ENCODE measurements at regions of chr2 and their contacts with region 1.

Region 1: GRCh38 chr2:181305301-181306123 is 151.7 kb upstream of the ITGA4 start:
- DNase-seq: peak; percentile 93
- H3K4me3 ChIP-seq: peak overlapping the region; percentile 56
- H3K27ac ChIP-seq: peak overlapping the region; percentile 98
- H3K4me1 ChIP-seq: peaks cover 66% of the 10 kb centered on the region
- CTCF ChIP-seq: no peak

Region 2: DNA sequence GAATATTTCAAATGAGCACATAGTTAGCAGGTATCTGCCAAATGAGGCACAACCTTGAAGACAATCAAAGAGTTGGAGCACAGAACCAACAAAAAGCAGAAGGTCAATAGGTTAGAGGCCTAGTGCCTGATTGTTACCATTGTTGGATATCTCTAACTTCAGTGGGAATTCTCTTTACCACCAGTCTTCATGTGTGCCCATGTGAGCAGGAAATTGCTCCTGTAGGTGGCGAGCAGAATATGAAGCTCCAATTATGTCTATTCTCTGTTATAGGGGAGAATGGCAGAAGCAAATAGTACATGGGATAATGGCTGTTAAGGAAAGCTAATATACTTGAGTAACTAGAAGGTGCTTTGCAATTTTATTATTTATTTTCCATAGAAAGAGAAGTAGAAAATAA is 1429.2 kb before region 1 on chr2:
- CTCF ChIA-PET with region 1: no interaction called
- POLR2A ChIA-PET with region 1: no interaction called
- intact Hi-C with region 1: loop called (anchors 5 kb)
- DNase-seq: peak; percentile 54
- H3K4me3 ChIP-seq: peak overlapping the region; percentile 66
- H3K27ac ChIP-seq: peak overlapping the region; percentile 100
- H3K4me1 ChIP-seq: peaks cover 97% of the 10 kb centered on the region
- CTCF ChIP-seq: peak; percentile 72

Region 3: GRCh38 chr2:181104512-181105115 is 200.9 kb before region 1 on chr2:
- CTCF ChIA-PET with region 1: no interaction called
- POLR2A ChIA-PET with region 1: no interaction called
- intact Hi-C with region 1: loop called (anchors 5 kb)
- DNase-seq: peak; percentile 33
- H3K4me3 ChIP-seq: no peak overlapping the region
- H3K27ac ChIP-seq: no peak overlapping the region
- H3K4me1 ChIP-seq: no peaks in the 10 kb centered on the region
- CTCF ChIP-seq: peak; percentile 90

Region 4: DNA sequence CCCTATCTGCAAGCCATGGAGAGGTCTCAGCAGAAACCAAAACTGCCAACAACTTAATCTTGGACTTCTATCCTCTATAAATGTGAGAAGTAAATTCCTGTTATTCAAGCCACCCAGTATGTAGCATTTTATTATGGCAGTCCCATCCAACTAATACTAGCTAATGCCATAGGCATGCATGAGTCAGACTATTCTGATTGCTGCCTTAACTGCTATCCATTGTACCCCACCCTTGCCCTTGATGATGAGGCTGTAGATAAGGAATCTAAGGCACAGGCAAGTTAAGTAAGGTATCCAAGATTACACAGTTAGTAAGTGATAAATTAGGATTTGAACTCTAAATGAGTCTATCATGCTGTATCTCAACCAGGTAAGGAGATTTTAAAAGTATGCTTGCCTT is 102.1 kb before region 1 on chr2:
- CTCF ChIA-PET with region 1: no interaction called
- POLR2A ChIA-PET with region 1: no interaction called
- intact Hi-C with region 1: no loop called
- DNase-seq: no peak
- H3K4me3 ChIP-seq: no peak overlapping the region
- H3K27ac ChIP-seq: no peak overlapping the region
- H3K4me1 ChIP-seq: no peaks in the 10 kb centered on the region
- CTCF ChIP-seq: no peak

Region 5: DNA sequence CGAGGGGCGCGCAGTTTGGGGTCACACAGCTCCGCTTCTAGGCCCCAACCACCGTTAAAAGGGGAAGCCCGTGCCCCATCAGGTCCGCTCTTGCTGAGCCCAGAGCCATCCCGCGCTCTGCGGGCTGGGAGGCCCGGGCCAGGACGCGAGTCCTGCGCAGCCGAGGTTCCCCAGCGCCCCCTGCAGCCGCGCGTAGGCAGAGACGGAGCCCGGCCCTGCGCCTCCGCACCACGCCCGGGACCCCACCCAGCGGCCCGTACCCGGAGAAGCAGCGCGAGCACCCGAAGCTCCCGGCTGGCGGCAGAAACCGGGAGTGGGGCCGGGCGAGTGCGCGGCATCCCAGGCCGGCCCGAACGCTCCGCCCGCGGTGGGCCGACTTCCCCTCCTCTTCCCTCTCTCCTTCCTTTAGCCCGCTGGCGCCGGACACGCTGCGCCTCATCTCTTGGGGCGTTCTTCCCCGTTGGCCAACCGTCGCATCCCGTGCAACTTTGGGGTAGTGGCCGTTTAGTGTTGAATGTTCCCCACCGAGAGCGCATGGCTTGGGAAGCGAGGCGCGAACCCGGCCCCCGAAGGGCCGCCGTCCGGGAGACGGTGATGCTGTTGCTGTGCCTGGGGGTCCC is 151.7 kb after region 1 on chr2 and contains the start of gene ITGA4:
- CTCF ChIA-PET with region 1: interaction called, 16 read pairs
- POLR2A ChIA-PET with region 1: interaction called, 198 read pairs
- intact Hi-C with region 1: loop called (anchors 1 kb)
- DNase-seq: peak; percentile 93
- H3K4me3 ChIP-seq: peak within 1 kb of the TSS; percentile 91
- H3K27ac ChIP-seq: peak within 1 kb of the TSS; percentile 95
- H3K4me1 ChIP-seq: peaks cover 44% of the 10 kb centered on the region
- CTCF ChIP-seq: peak; percentile 85
- total RNA-seq, gene ITGA4: 55.1 and 61.8 TPM in 2 replicates

Region 6: GRCh38 chr2:181573140-181573736 is 267.7 kb after region 1 on chr2:
- CTCF ChIA-PET with region 1: no interaction called
- POLR2A ChIA-PET with region 1: no interaction called
- intact Hi-C with region 1: loop called (anchors 5 kb)
- DNase-seq: peak; percentile 11
- H3K4me3 ChIP-seq: no peak overlapping the region
- H3K27ac ChIP-seq: no peak overlapping the region
- H3K4me1 ChIP-seq: no peaks in the 10 kb centered on the region
- CTCF ChIP-seq: peak; percentile 76

Region 7: GRCh38 chr2:182715896-182716668 is 1410.6 kb after region 1 on chr2 and contains the start of gene DNAJC10:
- CTCF ChIA-PET with region 1: no interaction called
- POLR2A ChIA-PET with region 1: interaction called, 4 read pairs
- intact Hi-C with region 1: loop called (anchors 10 kb)
- DNase-seq: peak; percentile 85
- H3K4me3 ChIP-seq: peak within 1 kb of the TSS; percentile 87
- H3K27ac ChIP-seq: peak within 1 kb of the TSS; percentile 95
- H3K4me1 ChIP-seq: peaks cover 42% of the 10 kb centered on the region
- CTCF ChIP-seq: no peak
- total RNA-seq, gene DNAJC10: 117 and 151 TPM in 2 replicates

Measured in OCI-LY7 (cell line).